Pancreas (tissue), 10 donors: ENCODE measurements at regions of chr18 and their contacts with region 1.

Region 1: GRCh38 chr18:47730795-47731194 is 199.7 kb downstream of the SMAD2 start:
- DNase-seq: no peak
- ATAC-seq: no peak
- H3K4me3 ChIP-seq: no peak overlapping the region
- H3K27ac ChIP-seq: no peak overlapping the region
- H3K4me1 ChIP-seq: no peaks in the 10 kb centered on the region
- H3K27me3 ChIP-seq: no peaks in the 10 kb centered on the region
- CTCF ChIP-seq: no peak

Region 2: DNA sequence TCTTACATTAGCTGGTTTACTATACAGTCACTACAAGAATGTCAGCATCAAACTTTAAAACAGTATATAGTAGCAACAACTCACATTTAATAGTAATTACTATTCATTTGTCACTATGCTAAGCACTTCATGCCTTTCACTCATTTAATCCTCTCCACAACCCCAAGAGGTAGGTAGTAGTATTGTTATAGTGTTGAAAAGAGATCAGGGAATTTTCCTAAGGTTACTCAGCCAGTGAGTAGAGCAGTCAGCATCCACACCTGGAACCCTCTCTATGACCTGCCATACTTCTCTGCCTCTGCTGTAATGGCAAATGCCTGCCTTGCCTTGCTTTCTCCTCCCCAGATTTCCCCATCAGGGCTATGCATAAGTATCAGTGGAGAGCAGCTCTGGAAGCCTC is 504.1 kb before region 1 on chr18:
- intact Hi-C with region 1: loop called in 1 of 3 experiments (anchors 10 kb)
- DNase-seq: no peak
- ATAC-seq: no peak
- H3K4me3 ChIP-seq: no peak overlapping the region
- H3K27ac ChIP-seq: no peak overlapping the region
- H3K4me1 ChIP-seq: no peaks in the 10 kb centered on the region
- H3K27me3 ChIP-seq: peaks cover 0 to 2% (median 0%) of the 10 kb centered on the region in 4 donors
- CTCF ChIP-seq: no peak